Activated CD8-positive, alpha-beta memory T cell treated with anti-CD3 and anti-CD28 coated beads, Interleukin-2, amount 10 ng/mL, durations not matched to agents 7 days and 5 days (primary cell): ENCODE measurements at regions of chr2 and their contacts with region 1.

Region 1: GRCh38 chr2:222707689-222708525 is 36.4 kb downstream of the MOGAT1 start:
- DNase-seq: peak; percentile 81
- ATAC-seq: peak; percentile 89
- H3K4me3 Mint-ChIP-seq: no peak overlapping the region
- H3K27ac Mint-ChIP-seq: peak overlapping the region; percentile 21
- H3K4me1 Mint-ChIP-seq: peaks cover 20% of the 10 kb centered on the region
- H3K27me3 Mint-ChIP-seq: peaks cover 54% of the 10 kb centered on the region

Region 2: DNA sequence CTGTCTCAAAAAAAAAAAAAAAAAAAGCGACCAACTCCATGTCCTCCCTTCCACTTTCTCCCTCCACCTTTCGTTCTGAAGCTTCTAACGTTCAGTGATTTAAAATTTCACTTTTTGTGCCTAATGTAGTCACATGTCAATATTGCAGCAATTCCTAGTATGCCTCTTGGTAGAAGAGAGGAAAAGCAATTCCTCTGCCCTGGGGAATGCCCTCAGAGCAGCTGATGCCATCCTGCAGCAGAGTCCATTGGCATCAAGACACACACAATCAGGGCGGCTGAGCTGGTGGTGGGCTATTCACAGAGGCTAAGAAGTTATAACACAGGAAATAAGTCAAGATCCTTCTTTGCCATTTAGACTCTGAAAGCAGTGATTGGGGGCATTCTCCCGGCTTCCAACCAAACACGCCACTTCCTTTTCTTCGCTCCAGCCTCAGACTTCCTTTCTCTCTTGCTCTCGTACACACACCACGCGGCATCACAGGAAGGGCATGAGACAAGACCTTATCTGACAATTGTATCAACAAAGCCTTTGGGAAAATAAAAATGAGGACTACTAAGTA is 35.4 kb after region 1 on chr2:
- CTCF ChIA-PET with region 1: no interaction called
- DNase-seq: no peak
- ATAC-seq: no peak
- H3K4me3 Mint-ChIP-seq: no peak overlapping the region
- H3K27ac Mint-ChIP-seq: no peak overlapping the region
- H3K4me1 Mint-ChIP-seq: peaks cover 35% of the 10 kb centered on the region
- H3K27me3 Mint-ChIP-seq: peaks cover 22% of the 10 kb centered on the region

Region 3: DNA sequence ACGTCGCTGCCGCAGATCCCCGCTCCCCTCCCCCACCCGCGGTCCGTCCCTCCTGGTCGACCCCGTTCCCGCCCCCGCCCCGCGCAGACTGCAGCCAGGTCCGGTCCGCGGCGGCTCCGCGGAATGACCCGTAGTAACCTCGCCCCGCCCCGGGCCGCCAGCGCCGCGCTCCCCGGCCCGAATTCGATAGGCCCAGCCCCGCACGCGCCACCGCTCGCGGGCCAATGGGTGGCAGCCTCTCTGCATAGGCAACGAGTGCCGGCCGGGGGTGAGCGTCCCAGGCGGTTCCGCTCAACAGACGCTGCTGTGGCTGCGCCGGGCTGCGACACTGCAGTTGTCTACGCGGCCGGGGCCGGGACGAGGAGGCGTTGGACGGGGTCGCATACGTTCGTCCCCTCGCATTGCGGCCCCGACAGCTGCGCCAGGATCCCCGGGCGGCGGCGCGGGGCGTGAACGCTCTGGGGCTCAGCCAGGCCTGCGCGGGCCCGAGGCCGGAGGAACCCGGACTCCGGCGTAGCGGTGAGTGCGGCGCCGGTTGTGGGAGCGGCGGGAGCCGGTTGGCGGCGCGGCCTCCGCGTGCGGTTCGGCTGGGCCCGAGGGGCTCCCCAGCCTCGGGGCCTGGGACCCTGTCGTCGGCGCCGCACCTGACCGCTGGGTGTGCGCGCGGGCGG is 153.0 kb after region 1 on chr2 and contains the start of gene ACSL3:
- CTCF ChIA-PET with region 1: interaction called, 14 read pairs
- DNase-seq: peak; percentile 97
- ATAC-seq: peak; percentile 99
- H3K4me3 Mint-ChIP-seq: peak within 1 kb of the TSS; percentile 66
- H3K27ac Mint-ChIP-seq: peak within 1 kb of the TSS; percentile 81
- H3K4me1 Mint-ChIP-seq: peaks cover 13% of the 10 kb centered on the region
- H3K27me3 Mint-ChIP-seq: peaks cover 19% of the 10 kb centered on the region
- total RNA-seq, gene ACSL3: 32.1 to 58.7 TPM

Region 4: GRCh38 chr2:222903234-222904220 is 195.6 kb after region 1 on chr2:
- CTCF ChIA-PET with region 1: interaction called, 21 read pairs
- DNase-seq: no peak
- ATAC-seq: peak; percentile 70
- H3K4me3 Mint-ChIP-seq: no peak overlapping the region
- H3K27ac Mint-ChIP-seq: no peak overlapping the region
- H3K4me1 Mint-ChIP-seq: peaks cover 12% of the 10 kb centered on the region
- H3K27me3 Mint-ChIP-seq: no peaks in the 10 kb centered on the region

Region 5: DNA sequence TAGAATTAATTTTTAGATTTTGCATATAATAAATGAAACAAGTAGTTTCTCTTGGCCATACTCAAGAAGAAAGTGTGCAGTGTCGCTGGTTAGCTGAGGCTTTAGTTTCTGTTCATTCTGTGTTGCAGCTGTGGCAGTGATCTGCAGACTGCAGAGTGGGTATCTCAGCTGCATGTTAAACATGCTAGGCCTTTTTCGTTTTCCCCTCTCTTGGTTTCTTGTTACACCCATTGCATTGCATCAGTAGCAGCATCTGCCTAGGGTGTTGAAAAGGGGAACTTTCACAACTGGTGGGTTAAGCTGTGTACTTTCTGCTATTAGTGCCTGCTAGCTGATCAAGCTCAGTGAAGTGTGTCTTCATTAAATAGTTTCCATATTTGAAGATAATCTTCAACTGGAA is 204.2 kb after region 1 on chr2:
- CTCF ChIA-PET with region 1: interaction called, 20 read pairs
- DNase-seq: no peak
- ATAC-seq: peak; percentile 23
- H3K4me3 Mint-ChIP-seq: no peak overlapping the region
- H3K27ac Mint-ChIP-seq: no peak overlapping the region
- H3K4me1 Mint-ChIP-seq: peaks cover 17% of the 10 kb centered on the region
- H3K27me3 Mint-ChIP-seq: no peaks in the 10 kb centered on the region

Region 6: GRCh38 chr2:222939208-222939856 is 231.4 kb after region 1 on chr2:
- CTCF ChIA-PET with region 1: interaction called, 10 read pairs
- DNase-seq: peak; percentile 81
- ATAC-seq: peak; percentile 86
- H3K4me3 Mint-ChIP-seq: no peak overlapping the region
- H3K27ac Mint-ChIP-seq: no peak overlapping the region
- H3K4me1 Mint-ChIP-seq: peaks cover 8% of the 10 kb centered on the region
- H3K27me3 Mint-ChIP-seq: no peaks in the 10 kb centered on the region

Region 7: GRCh38 chr2:224126003-224126402 is 1418.1 kb after region 1 on chr2:
- CTCF ChIA-PET with region 1: no interaction called
- DNase-seq: no peak
- ATAC-seq: no peak
- H3K4me3 Mint-ChIP-seq: no peak overlapping the region
- H3K27ac Mint-ChIP-seq: no peak overlapping the region
- H3K4me1 Mint-ChIP-seq: no peaks in the 10 kb centered on the region
- H3K27me3 Mint-ChIP-seq: peaks cover 16% of the 10 kb centered on the region